Ovary (tissue), 10 donors: ENCODE measurements at regions of chr14 and their contacts with region 1.

Region 1: DNA sequence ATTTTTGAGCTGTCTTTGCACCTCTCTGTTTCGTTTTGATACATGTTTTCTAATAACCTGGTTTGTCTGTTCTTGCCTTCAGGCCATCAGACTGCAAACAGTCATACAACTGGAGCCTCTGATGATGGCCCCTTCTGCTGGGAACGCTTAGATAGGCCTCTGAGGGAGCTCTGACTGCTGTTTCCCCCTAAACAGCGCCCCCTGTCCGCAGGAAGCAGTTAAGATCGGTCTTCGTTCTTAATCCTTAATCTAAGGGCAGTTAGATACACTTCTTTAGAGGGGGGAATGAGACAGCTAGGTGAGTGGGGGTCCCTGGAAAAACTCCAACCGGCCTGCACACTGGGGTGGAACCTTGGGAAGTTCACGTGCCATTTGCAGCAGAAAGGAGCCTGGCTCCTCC is 1338.8 kb upstream of the SEL1L start:
- DNase-seq: no peak
- H3K4me3 ChIP-seq: no peak overlapping the region
- H3K27ac ChIP-seq: no peak overlapping the region
- H3K4me1 ChIP-seq: no peaks in the 10 kb centered on the region
- H3K27me3 ChIP-seq: no peaks in the 10 kb centered on the region
- CTCF ChIP-seq: no peak
- EP300 ChIP-seq: no peak
- POLR2A ChIP-seq: no peak

Region 2: DNA sequence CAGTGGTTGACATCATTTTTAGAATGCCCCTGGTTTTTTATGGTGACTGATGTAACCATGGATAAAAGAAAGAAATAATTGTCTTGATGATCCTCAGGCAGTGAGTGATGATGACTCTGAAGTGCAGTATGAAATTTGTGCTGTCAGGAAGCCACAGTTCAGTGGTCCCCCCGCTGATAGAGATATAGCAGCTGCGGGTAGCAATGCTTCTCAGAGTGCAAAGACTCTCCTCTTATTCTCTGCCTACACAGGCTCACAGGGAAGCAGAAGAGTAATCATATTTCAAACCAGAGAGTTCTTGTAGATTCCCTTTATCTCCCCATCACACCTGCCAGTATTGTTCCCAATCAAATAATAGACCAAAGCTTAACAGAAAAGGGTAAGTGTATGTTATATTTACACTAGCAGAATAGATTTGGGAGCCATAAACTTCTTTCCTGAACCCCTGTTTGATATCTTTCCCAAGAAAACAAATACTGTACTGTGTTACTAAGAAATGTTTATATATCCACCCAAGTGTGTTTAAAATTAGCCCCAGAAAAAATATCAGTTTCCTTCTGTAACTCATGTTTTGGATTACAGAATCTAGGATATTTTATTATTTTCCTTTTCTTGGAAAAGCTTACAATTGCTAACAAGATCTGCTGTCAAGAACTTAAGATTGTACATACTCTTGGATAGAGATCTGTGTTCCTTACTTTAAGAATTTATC is 840.1 kb after region 1 on chr14:
- intact Hi-C with region 1: loop called in 1 of 4 experiments (anchors 10 kb)
- DNase-seq: no peak
- H3K4me3 ChIP-seq: no peak overlapping the region
- H3K27ac ChIP-seq: no peak overlapping the region
- H3K4me1 ChIP-seq: peaks cover 4% of the 10 kb centered on the region
- H3K27me3 ChIP-seq: no peaks in the 10 kb centered on the region
- CTCF ChIP-seq: no peak
- EP300 ChIP-seq: no peak
- POLR2A ChIP-seq: no peak